ENCODE measurements at regions of chr5 and their contacts with region 1.

Region 1: GRCh38 chr5:392431-392988 is 50.5 kb upstream of the EXOC3 start:
- DNase-seq: peak; percentile 76
- ATAC-seq: peak; percentile 90
- H3K4me3 Mint-ChIP-seq: peak overlapping the region; percentile 80
- H3K27ac Mint-ChIP-seq: peak overlapping the region; percentile 95
- H3K4me1 Mint-ChIP-seq: peaks cover 34% of the 10 kb centered on the region
- H3K27me3 Mint-ChIP-seq: no peaks in the 10 kb centered on the region

Region 2: GRCh38 chr5:368183-369084 is 24.1 kb before region 1 on chr5:
- POLR2A ChIA-PET with region 1: interaction called, 16 read pairs
- DNase-seq: no peak
- ATAC-seq: no peak
- H3K4me3 Mint-ChIP-seq: peak overlapping the region; percentile 57
- H3K27ac Mint-ChIP-seq: peak overlapping the region; percentile 83
- H3K4me1 Mint-ChIP-seq: peaks cover 44% of the 10 kb centered on the region
- H3K27me3 Mint-ChIP-seq: no peaks in the 10 kb centered on the region

Region 3: GRCh38 chr5:373710-374602 is 18.6 kb before region 1 on chr5:
- POLR2A ChIA-PET with region 1: interaction called, 27 read pairs
- DNase-seq: peak; percentile 91
- ATAC-seq: peak; percentile 43
- H3K4me3 Mint-ChIP-seq: peak overlapping the region; percentile 70
- H3K27ac Mint-ChIP-seq: peak overlapping the region; percentile 90
- H3K4me1 Mint-ChIP-seq: peaks cover 63% of the 10 kb centered on the region
- H3K27me3 Mint-ChIP-seq: no peaks in the 10 kb centered on the region

Measured in activated naive CD8-positive, alpha-beta T cell treated with anti-CD3 and anti-CD28 coated beads, Interleukin-2, amount 10 ng/mL, durations not matched to agents 7 days and 5 days (primary cell).